Right lobe of liver (tissue), 6 donors: ENCODE measurements at regions of chr17 and their contacts with region 1.

Region 1: GRCh38 chr17:18314731-18315561 is at the starts of genes SMCR8 and TOP3A:
- DNase-seq: peak; percentile 97 to 99 (median 98)
- ATAC-seq: peak; percentile 94 to 97 (median 96)
- H3K4me3 ChIP-seq: peak within 1 kb of the TSS; percentile 72 to 89 (median 72)
- H3K27ac ChIP-seq: peak within 1 kb of the TSS; percentile 66 to 91 (median 76)
- H3K4me1 ChIP-seq: peaks cover 0 to 41% (median 13%) of the 10 kb centered on the region in 4 donors
- H3K27me3 ChIP-seq: no peaks in the 10 kb centered on the region
- CTCF ChIP-seq: no peak
- POLR2A ChIP-seq: peak; percentile 34
- total RNA-seq, gene SMCR8: 4.2 to 7.9 (median 6.4) TPM
- total RNA-seq, gene TOP3A: 13.7 to 29.9 (median 20.7) TPM

Region 2: DNA sequence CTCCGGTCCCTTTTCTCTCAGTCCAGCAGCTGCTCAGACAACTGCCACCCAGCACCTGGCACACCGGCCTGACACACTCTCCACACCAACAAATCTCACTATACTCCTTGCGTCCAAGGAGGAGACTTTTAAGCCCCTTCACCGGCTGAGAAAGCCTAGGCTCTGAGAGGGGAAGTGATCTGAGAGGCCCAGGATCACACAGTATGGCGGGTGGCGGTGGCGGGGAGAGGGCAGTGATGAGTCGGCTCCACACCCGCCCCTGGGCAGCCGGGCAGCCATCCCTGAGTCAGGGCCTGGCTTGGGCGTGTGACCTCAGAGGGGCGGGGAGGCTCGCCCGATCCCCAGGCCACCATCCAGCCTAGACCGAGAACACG is 57.0 kb before region 1 on chr17:
- intact Hi-C with region 1: loop called in 1 of 2 experiments (anchors 10 kb)
- DNase-seq: peak; percentile 79 to 84 (median 83)
- ATAC-seq: peak; percentile 62 to 69 (median 68)
- H3K4me3 ChIP-seq: peak overlapping the region; percentile 83 to 100 (median 97)
- H3K27ac ChIP-seq: peak overlapping the region; percentile 76 to 92 (median 89)
- H3K4me1 ChIP-seq: peaks cover 0 to 35% (median 13%) of the 10 kb centered on the region in 4 donors
- H3K27me3 ChIP-seq: no peaks in the 10 kb centered on the region
- CTCF ChIP-seq: no peak
- POLR2A ChIP-seq: no peak